Activated naive CD4-positive, alpha-beta T cell treated with anti-CD3 and anti-CD28 coated beads for 36 hours (primary cell): ENCODE measurements at regions of chr6 and their contacts with region 1.

Region 1: GRCh38 chr6:18488526-18489270 is 101.5 kb downstream of the RNF144B start:
- DNase-seq: no peak
- H3K4me3 Mint-ChIP-seq: no peak overlapping the region
- H3K27ac Mint-ChIP-seq: no peak overlapping the region
- H3K4me1 Mint-ChIP-seq: peaks cover 13% of the 10 kb centered on the region
- H3K27me3 Mint-ChIP-seq: peaks cover 14% of the 10 kb centered on the region

Region 2: DNA sequence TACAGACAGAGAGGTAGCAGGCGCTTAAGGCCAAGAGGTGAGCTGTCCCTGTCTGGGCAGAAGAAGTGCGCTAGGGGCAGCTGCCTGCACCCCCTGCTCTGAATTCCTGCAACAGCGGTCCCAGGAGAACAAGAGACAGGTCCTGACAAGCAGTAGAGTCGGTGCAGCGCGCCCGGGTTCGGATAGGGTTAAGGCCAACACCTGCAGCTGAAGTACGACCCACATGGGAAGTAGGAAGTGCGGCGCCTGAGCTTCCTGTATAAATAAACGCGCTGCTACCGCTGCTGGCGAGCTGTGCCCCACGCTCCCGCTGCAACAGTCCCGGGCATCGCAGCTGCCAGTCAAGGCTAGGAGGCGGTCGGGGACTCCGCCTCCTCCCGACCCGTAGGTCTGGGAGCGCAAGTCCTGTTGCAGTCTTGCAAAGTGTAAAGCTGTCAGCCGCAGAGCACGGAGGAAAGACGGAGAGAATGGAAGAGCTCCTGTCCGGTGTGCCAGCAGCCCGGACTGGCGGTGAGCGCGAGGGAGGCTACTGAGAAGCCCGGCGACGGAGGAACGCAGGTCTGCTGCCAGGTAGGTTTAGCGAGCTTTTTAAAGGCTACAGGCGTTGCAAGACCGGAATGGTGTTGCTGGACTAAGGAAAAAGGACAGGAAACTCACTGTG is 101.5 kb before region 1 on chr6 and contains the start of gene RNF144B:
- CTCF ChIA-PET with region 1: no interaction called
- intact Hi-C with region 1: loop called (anchors 5 kb)
- DNase-seq: peak; percentile 77
- H3K4me3 Mint-ChIP-seq: peak within 1 kb of the TSS; percentile 86
- H3K27ac Mint-ChIP-seq: peak within 1 kb of the TSS; percentile 32
- H3K4me1 Mint-ChIP-seq: peaks cover 25% of the 10 kb centered on the region
- H3K27me3 Mint-ChIP-seq: no peaks in the 10 kb centered on the region
- total RNA-seq, gene RNF144B: 1.5 to 3.2 TPM

Region 3: GRCh38 chr6:18400831-18401446 is 87.8 kb before region 1 on chr6:
- CTCF ChIA-PET with region 1: no interaction called
- intact Hi-C with region 1: loop called (anchors 1 kb)
- DNase-seq: no peak
- H3K4me3 Mint-ChIP-seq: no peak overlapping the region
- H3K27ac Mint-ChIP-seq: peak overlapping the region; percentile 59
- H3K4me1 Mint-ChIP-seq: peaks cover 15% of the 10 kb centered on the region
- H3K27me3 Mint-ChIP-seq: no peaks in the 10 kb centered on the region

Region 4: GRCh38 chr6:18439581-18439980 is 49.1 kb before region 1 on chr6:
- CTCF ChIA-PET with region 1: no interaction called
- intact Hi-C with region 1: no loop called
- DNase-seq: no peak
- H3K4me3 Mint-ChIP-seq: no peak overlapping the region
- H3K27ac Mint-ChIP-seq: no peak overlapping the region
- H3K4me1 Mint-ChIP-seq: peaks cover 6% of the 10 kb centered on the region
- H3K27me3 Mint-ChIP-seq: no peaks in the 10 kb centered on the region